Heart right ventricle (tissue), 16 donors: ENCODE measurements at regions of chr4 and their contacts with region 1.

Region 1: GRCh38 chr4:18075823-18076433 is 54.4 kb upstream of the LCORL start:
- DNase-seq: peak; percentile 14 to 45
- ATAC-seq: peak in 7 of 8 donors; percentile 63 to 82 (median 77)
- H3K4me3 ChIP-seq: no peak overlapping the region
- H3K27ac ChIP-seq: peak overlapping the region in 1 of 10 donors; percentile 12
- H3K4me1 ChIP-seq: peaks cover 0 to 16% (median 4%) of the 10 kb centered on the region in 9 donors
- H3K27me3 ChIP-seq: peaks cover 0 to 3% (median 0%) of the 10 kb centered on the region in 7 donors
- CTCF ChIP-seq: peak in 8 of 9 donors; percentile 34 to 67 (median 52)

Region 2: GRCh38 chr4:17941731-17942130 is 134.2 kb before region 1 on chr4:
- intact Hi-C with region 1: no loop called
- DNase-seq: no peak
- ATAC-seq: no peak
- H3K4me3 ChIP-seq: no peak overlapping the region
- H3K27ac ChIP-seq: no peak overlapping the region
- H3K4me1 ChIP-seq: no peaks in the 10 kb centered on the region
- H3K27me3 ChIP-seq: no peaks in the 10 kb centered on the region
- CTCF ChIP-seq: no peak

Region 3: DNA sequence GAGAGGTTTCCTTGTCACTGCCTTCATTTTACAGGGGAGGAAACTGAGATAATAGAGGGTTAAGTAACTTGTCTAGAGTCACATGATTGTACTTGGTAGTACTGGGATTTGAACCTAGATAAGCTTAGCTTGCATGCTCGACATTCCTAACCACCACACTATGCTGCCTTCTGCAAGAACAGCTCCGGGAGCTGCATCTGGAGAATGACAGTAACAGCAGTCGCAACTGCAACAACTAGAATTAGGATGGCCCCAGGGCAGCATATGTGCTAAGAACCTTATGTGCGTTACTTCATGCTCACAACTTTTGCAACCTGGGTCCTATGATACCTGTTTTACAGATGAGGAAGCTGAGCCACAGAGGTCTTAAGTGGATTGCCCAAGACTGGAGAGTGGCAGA is 35.2 kb after region 1 on chr4:
- intact Hi-C with region 1: loop called in 1 of 10 experiments (anchors 5 kb)
- DNase-seq: no peak
- ATAC-seq: no peak
- H3K4me3 ChIP-seq: no peak overlapping the region
- H3K27ac ChIP-seq: peak overlapping the region in 1 of 10 donors; percentile 8
- H3K4me1 ChIP-seq: peaks cover 0 to 42% (median 6%) of the 10 kb centered on the region in 9 donors
- H3K27me3 ChIP-seq: peaks cover 0 to 9% (median 0%) of the 10 kb centered on the region in 7 donors
- CTCF ChIP-seq: no peak